ENCODE measurements at regions of chr12 and their contacts with region 1.

Region 1: DNA sequence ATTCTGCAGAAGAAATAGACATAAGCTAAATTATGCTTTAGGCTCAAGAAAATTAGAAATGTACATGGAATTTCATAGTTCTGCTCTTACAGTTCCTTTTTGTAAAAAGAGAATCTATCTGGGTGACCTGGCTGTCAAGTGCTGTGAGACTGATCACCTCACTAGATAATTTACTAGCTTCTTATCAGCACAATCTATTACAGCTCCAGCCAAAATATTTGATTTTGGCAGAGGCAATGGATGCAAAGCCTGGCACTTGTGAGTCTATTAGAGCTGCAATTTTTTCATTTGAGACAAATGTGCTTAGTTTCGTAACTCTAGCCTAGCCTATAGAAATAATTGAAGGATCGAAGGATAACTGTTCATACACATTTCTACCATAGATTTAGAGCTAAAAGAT is 927.5 kb downstream of the SLC6A15 start:
- ATAC-seq: no peak
- H3K4me3 ChIP-seq: no peak overlapping the region
- H3K27ac ChIP-seq: no peak overlapping the region
- H3K4me1 ChIP-seq: no peaks in the 10 kb centered on the region

Region 2: DNA sequence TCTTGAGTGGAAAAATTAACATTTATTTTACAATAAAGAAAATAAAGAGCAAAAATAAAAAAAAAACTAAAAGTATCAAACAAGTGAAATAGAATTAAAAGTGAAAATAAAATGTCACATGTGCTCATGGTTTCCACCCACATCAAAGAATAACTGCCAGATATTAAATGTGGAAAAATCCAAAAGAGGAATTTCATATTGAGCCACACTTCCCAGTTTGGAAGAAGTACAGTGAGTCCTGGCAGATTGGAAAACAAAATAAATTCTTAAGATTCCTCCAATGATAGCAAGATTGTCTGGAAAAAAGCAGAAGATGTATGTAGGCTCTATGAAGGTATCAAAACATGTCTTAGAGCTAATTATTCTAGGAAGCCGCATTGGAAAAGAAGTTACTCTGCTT is 92.0 kb before region 1 on chr12:
- in situ Hi-C with region 1: loop called in 1 of 9 experiments (anchors 25 kb)
- ATAC-seq: no peak
- H3K4me3 ChIP-seq: no peak overlapping the region
- H3K27ac ChIP-seq: no peak overlapping the region
- H3K4me1 ChIP-seq: no peaks in the 10 kb centered on the region

Measured in motor neuron (in vitro differentiated cells).